Activated CD8-positive, alpha-beta T cell treated with anti-CD3 and anti-CD28 coated beads for 36 hours (primary cell): ENCODE measurements at regions of chr10 and their contacts with region 1.

Region 1: GRCh38 chr10:92087750-92088395 is 164.3 kb downstream of the BTAF1 start:
- DNase-seq: peak; percentile 78
- ATAC-seq: peak; percentile 99
- H3K4me3 Mint-ChIP-seq: no peak overlapping the region
- H3K27ac Mint-ChIP-seq: no peak overlapping the region
- H3K4me1 Mint-ChIP-seq: peaks cover 4% of the 10 kb centered on the region
- H3K27me3 Mint-ChIP-seq: no peaks in the 10 kb centered on the region
- CTCF ChIP-seq: peak; percentile 74

Region 2: DNA sequence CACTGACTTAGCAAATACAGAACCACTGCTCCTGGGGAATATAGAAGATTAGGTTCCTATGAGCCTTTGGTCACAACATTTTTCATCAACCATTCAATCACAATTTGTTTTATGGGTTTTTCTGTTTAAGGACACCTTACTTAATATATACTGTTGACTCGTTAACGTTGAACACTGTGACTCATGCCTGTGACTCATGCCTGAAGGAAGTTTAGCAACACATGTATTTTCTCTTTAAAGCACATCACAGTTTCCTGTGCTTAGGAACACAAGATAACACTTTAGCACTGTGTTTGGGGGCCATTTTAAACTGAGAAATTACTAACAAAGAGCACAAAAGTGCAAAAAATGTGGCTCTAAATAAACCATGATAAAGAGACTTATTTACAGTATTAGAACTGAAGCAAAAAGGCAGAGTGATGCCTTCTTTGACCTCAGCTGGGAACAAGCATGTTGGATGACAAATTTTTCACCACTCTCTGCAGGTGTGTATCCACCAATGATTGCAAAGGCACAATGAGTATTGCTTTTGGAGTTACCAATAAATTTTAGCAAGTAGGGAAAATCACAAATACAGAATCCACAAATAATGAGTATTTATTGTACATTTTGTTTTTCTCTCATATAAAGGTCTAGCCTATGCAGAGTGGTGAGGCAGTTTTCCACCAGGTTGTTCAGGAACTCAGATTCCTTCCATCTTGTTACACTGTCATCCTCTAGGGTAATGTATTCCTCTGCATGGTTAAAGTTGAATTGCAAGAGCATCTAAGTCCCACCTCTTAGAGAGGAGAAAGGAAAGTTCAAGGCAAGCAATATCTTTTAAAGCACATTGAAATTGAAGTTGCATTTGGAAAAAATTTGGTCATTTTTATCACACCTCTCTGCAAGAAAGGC is 185.8 kb before region 1 on chr10:
- CTCF ChIA-PET with region 1: no interaction called
- POLR2A ChIA-PET with region 1: no interaction called
- intact Hi-C with region 1: no loop called
- DNase-seq: peak; percentile 87
- ATAC-seq: peak; percentile 100
- H3K4me3 Mint-ChIP-seq: peak overlapping the region; percentile 29
- H3K27ac Mint-ChIP-seq: peak overlapping the region; percentile 92
- H3K4me1 Mint-ChIP-seq: peaks cover 29% of the 10 kb centered on the region
- H3K27me3 Mint-ChIP-seq: peaks cover 3% of the 10 kb centered on the region
- CTCF ChIP-seq: no peak

Region 3: GRCh38 chr10:92045641-92046106 is 42.2 kb before region 1 on chr10:
- CTCF ChIA-PET with region 1: no interaction called
- POLR2A ChIA-PET with region 1: no interaction called
- intact Hi-C with region 1: no loop called
- DNase-seq: no peak
- ATAC-seq: no peak
- H3K4me3 Mint-ChIP-seq: no peak overlapping the region
- H3K27ac Mint-ChIP-seq: no peak overlapping the region
- H3K4me1 Mint-ChIP-seq: peaks cover 10% of the 10 kb centered on the region
- H3K27me3 Mint-ChIP-seq: no peaks in the 10 kb centered on the region
- CTCF ChIP-seq: no peak

Region 4: GRCh38 chr10:92436611-92437010 is 348.7 kb after region 1 on chr10:
- CTCF ChIA-PET with region 1: interaction called, 7 read pairs
- POLR2A ChIA-PET with region 1: no interaction called
- intact Hi-C with region 1: loop called (anchors 5 kb)
- DNase-seq: no peak
- ATAC-seq: no peak
- H3K4me3 Mint-ChIP-seq: no peak overlapping the region
- H3K27ac Mint-ChIP-seq: no peak overlapping the region
- H3K4me1 Mint-ChIP-seq: no peaks in the 10 kb centered on the region
- H3K27me3 Mint-ChIP-seq: no peaks in the 10 kb centered on the region
- CTCF ChIP-seq: no peak